Testis (tissue), 5 donors: ENCODE measurements at regions of chr6 and their contacts with region 1.

Region 1: GRCh38 chr6:150016324-150017185 is 8.8 kb downstream of the RAET1L start:
- DNase-seq: peak; percentile 83
- H3K4me3 ChIP-seq: no peak overlapping the region
- H3K27ac ChIP-seq: no peak overlapping the region
- H3K4me1 ChIP-seq: no peaks in the 10 kb centered on the region
- H3K27me3 ChIP-seq: no peaks in the 10 kb centered on the region
- CTCF ChIP-seq: peak; percentile 61 to 64 (median 62)
- POLR2A ChIP-seq: no peak

Region 2: DNA sequence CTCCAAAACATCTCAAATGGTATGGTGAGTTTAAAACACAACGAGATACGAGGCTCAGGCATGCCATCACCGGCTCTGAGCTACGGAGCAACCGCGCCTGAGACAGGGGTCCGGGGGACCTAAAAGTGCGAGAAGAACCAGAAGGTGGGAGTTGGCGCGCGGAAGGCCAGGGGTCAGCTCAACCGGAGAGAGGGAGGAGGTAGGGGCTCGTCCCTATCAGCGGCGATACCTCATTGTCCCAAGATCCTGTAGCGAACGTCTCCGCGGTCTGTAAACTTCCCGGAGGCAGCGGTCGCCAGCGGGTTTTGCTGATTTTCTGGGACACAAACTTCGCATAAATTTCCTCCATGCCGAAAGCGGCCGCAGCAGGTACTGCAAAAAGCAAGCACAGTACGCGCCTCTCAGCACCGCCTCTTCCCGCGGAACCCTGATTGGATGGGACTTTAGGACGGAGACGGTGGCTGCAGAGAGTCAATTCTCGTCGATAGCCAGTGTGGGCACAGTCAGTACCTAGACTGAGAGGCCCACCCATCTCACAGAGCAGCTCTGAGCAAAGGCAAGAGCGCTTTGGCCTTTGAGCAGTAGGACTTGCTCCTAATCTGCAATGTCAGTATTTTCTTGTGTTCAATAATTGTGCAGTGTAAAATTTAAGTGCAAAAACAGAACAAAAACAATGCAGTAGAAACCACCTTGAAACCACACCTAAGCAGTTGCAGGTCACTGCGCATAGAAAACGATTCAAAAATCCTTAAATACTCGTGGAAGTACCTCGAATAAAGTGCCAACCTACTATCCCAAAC is 270.2 kb before region 1 on chr6 and contains the start of gene NUP43:
- intact Hi-C with region 1: no loop called
- DNase-seq: peak; percentile 96
- H3K4me3 ChIP-seq: peak within 1 kb of the TSS; percentile 67 to 89
- H3K27ac ChIP-seq: peak within 1 kb of the TSS; percentile 69 to 86
- H3K4me1 ChIP-seq: peaks cover 19% of the 10 kb centered on the region
- H3K27me3 ChIP-seq: no peaks in the 10 kb centered on the region
- CTCF ChIP-seq: peak; percentile 68 to 87 (median 82)
- POLR2A ChIP-seq: peak; percentile 3
- total RNA-seq, gene NUP43: 28.3 to 32.2 TPM

Region 3: GRCh38 chr6:149941583-149942431 is 74.7 kb before region 1 on chr6 and contains the start of gene ULBP2:
- intact Hi-C with region 1: loop called (anchors 5 kb)
- DNase-seq: peak; percentile 86
- H3K4me3 ChIP-seq: peak within 1 kb of the TSS; percentile 40 to 65
- H3K27ac ChIP-seq: no peak within 1 kb of the TSS
- H3K4me1 ChIP-seq: peaks cover 10% of the 10 kb centered on the region
- H3K27me3 ChIP-seq: peaks cover 7% of the 10 kb centered on the region
- CTCF ChIP-seq: no peak
- POLR2A ChIP-seq: no peak
- total RNA-seq, gene ULBP2: 1.5 to 2.0 TPM

Region 4: GRCh38 chr6:149963462-149964307 is 52.9 kb before region 1 on chr6 and contains the start of gene ULBP1:
- intact Hi-C with region 1: no loop called
- DNase-seq: peak; percentile 94
- H3K4me3 ChIP-seq: peak within 1 kb of the TSS; percentile 34 to 62
- H3K27ac ChIP-seq: peak within 1 kb of the TSS in 1 of 2 donors; percentile 16
- H3K4me1 ChIP-seq: peaks cover 11% of the 10 kb centered on the region
- H3K27me3 ChIP-seq: peaks cover 3% of the 10 kb centered on the region
- CTCF ChIP-seq: no peak
- POLR2A ChIP-seq: no peak
- total RNA-seq, gene ULBP1: 4.7 to 5.9 TPM